ENCODE measurements at regions of chr9 and their contacts with region 1.

Region 1: DNA sequence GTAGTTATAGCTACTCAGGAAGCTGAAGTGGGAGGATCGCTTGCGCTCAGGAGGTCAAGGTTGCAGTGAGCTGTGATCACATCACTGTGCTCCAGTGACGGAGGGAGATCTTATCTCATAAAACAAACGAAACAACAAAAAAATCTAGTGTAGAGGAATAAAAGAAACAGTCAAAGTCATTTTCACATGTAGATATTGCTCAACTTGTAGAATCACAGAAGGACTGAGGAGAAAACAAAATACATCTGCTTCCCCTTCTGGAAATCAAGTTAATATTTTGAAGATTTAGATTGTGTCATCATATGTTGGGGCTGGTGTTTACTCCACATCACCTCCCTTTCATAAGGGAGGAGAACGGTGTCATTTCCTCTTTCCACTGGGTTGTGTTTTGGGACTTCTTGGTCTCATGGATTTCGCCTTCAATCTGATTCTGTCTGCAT is 8.2 kb upstream of the SLC46A2 start:
- DNase-seq: no peak
- ATAC-seq: no peak
- H3K4me3 Mint-ChIP-seq: no peak overlapping the region
- H3K27ac Mint-ChIP-seq: no peak overlapping the region
- H3K4me1 Mint-ChIP-seq: peaks cover 13% of the 10 kb centered on the region
- H3K27me3 Mint-ChIP-seq: peaks cover 36% of the 10 kb centered on the region

Region 2: GRCh38 chr9:112757282-112757883 is 141.5 kb before region 1 on chr9:
- CTCF ChIA-PET with region 1: no interaction called
- POLR2A ChIA-PET with region 1: no interaction called
- DNase-seq: no peak
- ATAC-seq: no peak
- H3K4me3 Mint-ChIP-seq: no peak overlapping the region
- H3K27ac Mint-ChIP-seq: no peak overlapping the region
- H3K4me1 Mint-ChIP-seq: peaks cover 62% of the 10 kb centered on the region
- H3K27me3 Mint-ChIP-seq: peaks cover 5% of the 10 kb centered on the region

Region 3: DNA sequence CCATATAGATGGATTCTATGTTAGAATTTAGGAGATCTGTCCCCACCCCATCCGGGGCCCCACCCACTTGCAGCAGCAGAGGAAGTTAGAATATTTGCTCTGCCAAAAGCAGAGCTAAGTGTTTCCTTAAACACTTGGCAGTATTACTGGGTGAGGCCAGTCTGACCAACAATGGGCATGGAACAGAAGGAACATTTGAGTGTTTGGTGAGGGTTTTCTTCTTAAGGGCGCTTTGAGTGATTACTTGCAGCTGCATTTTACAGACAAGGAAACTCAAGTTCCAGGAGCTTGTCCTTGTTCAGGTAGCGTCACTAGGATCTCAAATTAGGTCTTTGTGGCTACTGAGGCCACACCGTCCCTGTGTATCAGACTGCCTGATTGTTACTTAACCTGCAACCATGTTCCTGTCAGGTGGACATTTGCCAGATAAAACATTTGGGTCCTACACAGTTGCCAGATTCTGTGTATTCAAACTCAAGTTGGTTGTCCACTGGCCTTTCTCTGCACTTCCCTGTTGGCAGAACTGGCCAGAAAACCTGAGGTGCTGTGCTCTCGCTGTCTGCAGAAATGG is 67.5 kb before region 1 on chr9:
- CTCF ChIA-PET with region 1: interaction called, 10 read pairs
- POLR2A ChIA-PET with region 1: no interaction called
- DNase-seq: peak; percentile 23
- ATAC-seq: no peak
- H3K4me3 Mint-ChIP-seq: no peak overlapping the region
- H3K27ac Mint-ChIP-seq: no peak overlapping the region
- H3K4me1 Mint-ChIP-seq: peaks cover 7% of the 10 kb centered on the region
- H3K27me3 Mint-ChIP-seq: no peaks in the 10 kb centered on the region

Region 4: DNA sequence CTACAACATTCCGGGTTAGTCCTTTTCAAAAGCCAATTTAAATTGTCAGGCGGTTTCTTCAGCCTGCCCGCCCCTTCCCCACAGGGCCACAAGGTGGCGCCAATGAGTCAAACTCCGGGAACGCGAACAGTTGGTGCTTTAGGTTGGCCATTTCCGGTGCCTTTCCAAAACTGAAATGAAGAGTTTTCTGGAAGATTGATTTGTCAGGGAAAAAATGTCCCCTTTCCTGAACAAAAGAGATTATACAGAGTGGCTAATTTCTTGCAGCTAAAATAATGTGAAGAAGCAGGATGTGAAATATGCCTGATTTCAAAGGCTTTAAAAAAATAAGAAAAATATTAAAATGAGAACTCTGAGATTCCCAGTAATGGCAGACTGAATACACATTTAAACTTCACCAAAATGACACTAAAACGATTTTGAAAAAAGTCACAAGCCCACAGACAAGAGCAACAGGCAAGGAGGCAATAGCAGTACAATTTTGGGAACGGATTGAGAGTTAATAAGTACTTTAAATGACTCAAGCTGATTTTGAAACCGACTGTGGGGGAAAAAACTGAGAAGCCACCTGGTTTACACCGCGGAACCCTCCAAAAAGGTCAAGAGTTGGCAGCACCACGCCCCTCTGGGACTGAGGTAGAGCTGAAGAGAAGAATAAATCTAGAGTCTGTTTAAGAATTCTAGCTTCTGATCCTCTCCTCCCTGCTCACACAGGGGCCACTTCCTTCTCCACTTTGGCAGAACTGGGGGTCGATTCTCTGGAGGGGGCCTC is 53.9 kb before region 1 on chr9:
- CTCF ChIA-PET with region 1: interaction called, 75 read pairs
- POLR2A ChIA-PET with region 1: no interaction called
- DNase-seq: peak; percentile 78
- ATAC-seq: peak; percentile 74
- H3K4me3 Mint-ChIP-seq: no peak overlapping the region
- H3K27ac Mint-ChIP-seq: no peak overlapping the region
- H3K4me1 Mint-ChIP-seq: peaks cover 14% of the 10 kb centered on the region
- H3K27me3 Mint-ChIP-seq: no peaks in the 10 kb centered on the region

Region 5: GRCh38 chr9:112878752-112879151 is 20.1 kb before region 1 on chr9:
- CTCF ChIA-PET with region 1: interaction called, 15 read pairs
- POLR2A ChIA-PET with region 1: no interaction called
- DNase-seq: no peak
- ATAC-seq: no peak
- H3K4me3 Mint-ChIP-seq: no peak overlapping the region
- H3K27ac Mint-ChIP-seq: no peak overlapping the region
- H3K4me1 Mint-ChIP-seq: no peaks in the 10 kb centered on the region
- H3K27me3 Mint-ChIP-seq: peaks cover 4% of the 10 kb centered on the region

Region 6: GRCh38 chr9:112884101-112884500 is 14.8 kb before region 1 on chr9:
- CTCF ChIA-PET with region 1: interaction called, 15 read pairs
- POLR2A ChIA-PET with region 1: no interaction called
- DNase-seq: no peak
- ATAC-seq: no peak
- H3K4me3 Mint-ChIP-seq: no peak overlapping the region
- H3K27ac Mint-ChIP-seq: no peak overlapping the region
- H3K4me1 Mint-ChIP-seq: peaks cover 3% of the 10 kb centered on the region
- H3K27me3 Mint-ChIP-seq: peaks cover 4% of the 10 kb centered on the region

Region 7: GRCh38 chr9:112914514-112914913 is 15.6 kb after region 1 on chr9:
- CTCF ChIA-PET with region 1: interaction called, 14 read pairs
- POLR2A ChIA-PET with region 1: no interaction called
- DNase-seq: no peak
- ATAC-seq: no peak
- H3K4me3 Mint-ChIP-seq: no peak overlapping the region
- H3K27ac Mint-ChIP-seq: no peak overlapping the region
- H3K4me1 Mint-ChIP-seq: no peaks in the 10 kb centered on the region
- H3K27me3 Mint-ChIP-seq: peaks cover 10% of the 10 kb centered on the region

Region 8: DNA sequence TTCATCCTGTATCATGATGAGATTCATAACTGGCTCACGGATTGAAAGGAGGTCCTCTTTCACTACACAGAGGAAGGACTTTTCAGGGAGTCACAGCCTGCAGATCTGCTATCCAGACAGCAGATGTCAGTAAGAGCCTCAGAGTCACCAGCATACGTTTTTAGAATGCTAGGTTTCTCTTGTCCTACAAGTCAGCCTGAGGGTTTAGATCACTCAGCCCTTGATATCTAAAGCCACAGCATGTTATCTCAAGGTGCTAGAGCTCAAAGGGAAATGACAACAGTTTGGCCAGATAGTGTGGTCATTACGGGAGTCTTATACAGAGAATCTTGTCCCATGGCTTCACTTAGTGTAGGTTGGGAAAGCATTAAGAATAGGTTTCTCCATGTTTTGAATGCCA is 22.7 kb after region 1 on chr9:
- CTCF ChIA-PET with region 1: interaction called, 14 read pairs
- POLR2A ChIA-PET with region 1: no interaction called
- DNase-seq: no peak
- ATAC-seq: no peak
- H3K4me3 Mint-ChIP-seq: no peak overlapping the region
- H3K27ac Mint-ChIP-seq: no peak overlapping the region
- H3K4me1 Mint-ChIP-seq: no peaks in the 10 kb centered on the region
- H3K27me3 Mint-ChIP-seq: peaks cover 29% of the 10 kb centered on the region